ENCODE measurements at regions of chr2 and their contacts with region 1.

Region 1: DNA sequence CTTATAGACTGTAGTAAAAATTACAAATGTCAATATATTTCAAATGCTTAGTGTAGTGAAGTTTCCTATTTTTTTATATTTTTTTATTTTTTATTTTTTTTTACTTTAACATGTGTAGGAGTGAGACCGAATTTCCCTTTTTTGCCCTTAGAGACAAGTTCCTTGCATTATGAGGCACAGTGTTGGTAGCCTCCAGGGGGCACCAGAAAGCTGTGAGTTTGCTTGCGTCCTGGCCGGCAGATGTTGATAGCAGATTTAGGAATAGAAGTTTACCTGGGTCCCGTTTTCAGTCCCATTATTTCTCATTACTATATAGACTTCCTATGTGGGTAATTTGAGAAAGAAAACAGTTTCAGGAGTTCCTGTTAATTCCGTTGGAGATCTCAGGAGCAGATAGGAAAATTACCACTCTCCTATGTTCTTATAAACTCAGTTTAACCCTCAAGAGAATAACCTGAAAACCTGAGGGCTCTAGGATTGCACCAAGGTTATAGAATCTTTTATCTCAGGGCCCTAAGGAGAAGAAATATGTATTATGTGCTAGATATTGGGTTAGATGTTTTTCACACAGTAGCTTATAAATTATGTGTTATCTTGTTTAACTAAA is 157.5 kb upstream of the SESTD1 start:
- DNase-seq: peak; percentile 83
- H3K4me3 ChIP-seq: no peak overlapping the region
- H3K27ac ChIP-seq: no peak overlapping the region
- H3K4me1 ChIP-seq: no peaks in the 10 kb centered on the region
- H3K27me3 ChIP-seq: no peaks in the 10 kb centered on the region
- CTCF ChIP-seq: peak; percentile 53 to 62 (median 56)
- POLR2A ChIP-seq: no peak

Region 2: GRCh38 chr2:179584760-179585159 is 162.6 kb after region 1 on chr2:
- intact Hi-C with region 1: no loop called
- DNase-seq: no peak
- H3K4me3 ChIP-seq: no peak overlapping the region
- H3K27ac ChIP-seq: no peak overlapping the region
- H3K4me1 ChIP-seq: no peaks in the 10 kb centered on the region
- H3K27me3 ChIP-seq: no peaks in the 10 kb centered on the region
- CTCF ChIP-seq: no peak
- POLR2A ChIP-seq: no peak

Region 3: DNA sequence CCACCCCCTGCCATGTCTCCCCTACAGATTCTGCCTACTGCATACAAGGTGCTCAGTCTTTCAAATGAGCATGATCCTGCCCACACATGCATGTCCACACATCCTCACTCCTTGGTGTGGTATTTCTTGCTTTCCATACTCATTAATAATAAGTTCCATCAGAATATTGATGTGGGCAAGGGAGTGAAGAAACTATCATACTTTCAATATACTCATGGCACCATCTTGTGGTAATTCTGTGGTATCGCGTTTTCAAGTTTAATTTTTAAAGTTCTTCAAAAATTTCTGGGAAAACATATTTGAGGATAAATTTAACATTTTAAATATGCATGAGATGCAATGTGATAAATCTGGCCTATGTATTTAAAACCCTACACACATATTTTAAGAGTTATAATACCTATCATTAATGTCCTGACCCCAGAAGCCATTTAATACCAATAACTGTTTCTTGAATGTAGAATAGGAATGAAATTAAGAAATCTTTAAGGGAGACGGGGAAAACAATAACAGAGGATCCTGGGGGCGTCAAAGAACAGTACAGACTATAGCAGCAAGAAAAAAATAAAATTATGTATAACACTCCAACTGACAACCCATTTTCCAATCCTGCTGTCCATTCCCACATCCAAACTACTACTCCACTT is 329.1 kb after region 1 on chr2:
- intact Hi-C with region 1: loop called (anchors 10 kb)
- DNase-seq: no peak
- H3K4me3 ChIP-seq: no peak overlapping the region
- H3K27ac ChIP-seq: no peak overlapping the region
- H3K4me1 ChIP-seq: no peaks in the 10 kb centered on the region
- H3K27me3 ChIP-seq: no peaks in the 10 kb centered on the region
- CTCF ChIP-seq: peak; percentile 27 to 73 (median 38)
- POLR2A ChIP-seq: no peak

Region 4: GRCh38 chr2:180607514-180608049 is 1185.4 kb after region 1 on chr2:
- intact Hi-C with region 1: no loop called
- DNase-seq: no peak
- H3K4me3 ChIP-seq: no peak overlapping the region
- H3K27ac ChIP-seq: no peak overlapping the region
- H3K4me1 ChIP-seq: no peaks in the 10 kb centered on the region
- H3K27me3 ChIP-seq: no peaks in the 10 kb centered on the region
- CTCF ChIP-seq: no peak
- POLR2A ChIP-seq: no peak